ENCODE measurements at regions of chr6 and their contacts with region 1.

Region 1: DNA sequence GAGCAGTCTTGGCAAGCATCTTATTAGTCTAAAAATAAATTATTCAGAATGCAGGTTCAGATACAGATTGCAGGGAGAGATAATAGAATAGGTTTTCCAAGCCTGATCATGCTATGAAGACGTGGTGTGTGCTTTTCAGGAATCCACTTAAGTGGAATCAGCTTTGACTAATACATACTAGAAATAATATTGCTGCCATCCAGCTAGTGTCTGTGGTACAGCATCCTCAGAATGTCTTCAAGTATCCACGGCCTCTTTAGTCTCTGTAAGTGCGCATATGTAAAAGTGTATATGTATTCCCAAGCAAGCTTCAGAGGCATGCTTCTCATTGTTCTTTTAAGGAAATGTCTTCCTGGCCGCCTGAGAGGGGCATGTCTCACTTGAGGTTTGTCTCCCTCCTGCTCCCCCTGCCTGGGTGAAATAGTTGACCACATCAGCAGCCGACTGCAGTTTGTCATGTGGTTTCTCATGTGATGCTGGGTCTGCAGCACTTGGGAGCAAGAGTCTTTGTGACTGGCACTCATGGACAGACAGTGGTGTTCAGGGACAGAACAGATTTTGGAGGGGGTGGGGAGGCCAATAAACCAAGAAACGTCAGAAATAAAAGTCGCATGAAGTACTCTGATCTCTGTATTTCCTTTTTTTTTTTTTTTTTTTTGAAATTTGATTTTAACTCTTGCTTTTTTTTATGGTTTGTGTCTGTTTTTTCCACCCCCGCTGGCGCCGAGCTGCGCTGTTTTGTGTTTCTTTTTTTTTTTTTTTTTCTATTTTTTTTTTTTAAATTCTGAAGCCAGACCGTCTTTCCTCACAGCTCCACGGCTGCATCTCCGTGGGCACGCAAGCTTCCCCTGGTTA is 150.8 kb downstream of the PRL start:
- DNase-seq: peak in 4 of 9 experiments; percentile 5 to 53 (median 30)
- ATAC-seq: peak; percentile 12
- H3K4me3 ChIP-seq: peak overlapping the region; percentile 28 to 57
- H3K4me3 Mint-ChIP-seq: peak overlapping the region; percentile 81
- H3K27ac ChIP-seq: no peak overlapping the region
- H3K27ac Mint-ChIP-seq: peak overlapping the region; percentile 76
- H3K4me1 ChIP-seq: peaks cover 24% of the 10 kb centered on the region
- H3K4me1 Mint-ChIP-seq: peaks cover 41% of the 10 kb centered on the region
- H3K27me3 ChIP-seq: no peaks in the 10 kb centered on the region
- H3K27me3 Mint-ChIP-seq: peaks cover 25% of the 10 kb centered on the region
- CTCF ChIP-seq: no peak

Region 2: DNA sequence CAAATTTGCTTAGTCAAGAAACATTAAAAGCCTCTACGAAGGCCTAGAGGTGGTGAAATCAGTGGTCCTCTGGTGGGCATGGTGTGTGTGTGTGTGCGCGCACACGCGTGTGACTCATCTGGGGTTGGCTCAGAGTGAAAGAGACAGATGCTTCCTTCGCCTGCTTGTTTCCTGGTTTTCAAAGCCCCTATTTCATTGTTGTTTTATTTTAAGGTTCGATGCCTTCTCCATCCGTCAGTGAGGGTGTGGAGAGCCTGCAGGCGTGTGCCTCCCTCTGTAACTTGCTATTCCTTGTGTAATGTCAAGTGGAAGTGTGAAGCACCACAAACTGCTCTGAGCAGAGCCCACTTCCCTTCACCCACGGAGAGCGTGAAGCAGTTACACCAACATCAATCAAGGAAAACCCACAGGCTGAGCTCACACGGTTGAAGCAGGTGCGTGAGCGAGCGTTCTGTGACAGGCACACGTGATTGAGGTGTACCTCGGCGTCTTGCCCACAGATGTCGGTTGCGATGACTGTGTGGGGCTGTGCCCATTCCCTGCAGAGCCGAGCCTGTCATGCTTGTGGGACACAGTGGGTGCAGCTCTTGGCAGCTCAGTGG is 83.1 kb before region 1 on chr6:
- CTCF ChIA-PET with region 1: no interaction called
- POLR2A ChIA-PET with region 1: no interaction called
- intact Hi-C with region 1: loop called in 1 of 2 experiments (anchors 5 kb)
- DNase-seq: peak; percentile 2 to 82 (median 60)
- ATAC-seq: peak; percentile 83
- H3K4me3 ChIP-seq: peak overlapping the region in 1 of 2 experiments; percentile 20
- H3K4me3 Mint-ChIP-seq: peak overlapping the region; percentile 68
- H3K27ac ChIP-seq: peak overlapping the region in 1 of 2 experiments; percentile 10
- H3K27ac Mint-ChIP-seq: peak overlapping the region; percentile 53
- H3K4me1 ChIP-seq: peaks cover 8% of the 10 kb centered on the region
- H3K4me1 Mint-ChIP-seq: peaks cover 18% of the 10 kb centered on the region
- H3K27me3 ChIP-seq: no peaks in the 10 kb centered on the region
- H3K27me3 Mint-ChIP-seq: no peaks in the 10 kb centered on the region
- CTCF ChIP-seq: no peak

Region 3: DNA sequence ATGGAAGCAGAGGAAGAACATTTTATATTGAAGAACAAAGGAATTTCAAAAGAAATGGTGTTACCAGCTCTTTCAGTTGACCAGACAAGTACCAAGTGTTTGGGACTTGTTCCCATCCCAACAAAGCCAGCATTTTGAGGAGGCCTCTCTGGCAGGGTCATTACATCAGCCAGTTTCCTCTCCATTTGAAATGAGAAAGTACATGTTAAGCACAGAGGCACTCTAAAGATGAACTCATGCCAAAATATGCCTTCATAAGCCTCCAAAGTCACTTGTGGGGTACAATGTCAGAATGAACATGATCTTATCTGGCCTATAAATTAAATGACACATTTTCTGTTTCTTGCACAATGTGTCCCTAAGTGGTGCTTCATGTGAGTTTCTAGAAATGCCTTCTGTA is 73.1 kb before region 1 on chr6:
- CTCF ChIA-PET with region 1: no interaction called
- POLR2A ChIA-PET with region 1: no interaction called
- intact Hi-C with region 1: no loop called
- DNase-seq: no peak
- ATAC-seq: no peak
- H3K4me3 ChIP-seq: no peak overlapping the region
- H3K4me3 Mint-ChIP-seq: no peak overlapping the region
- H3K27ac ChIP-seq: no peak overlapping the region
- H3K27ac Mint-ChIP-seq: no peak overlapping the region
- H3K4me1 ChIP-seq: no peaks in the 10 kb centered on the region
- H3K4me1 Mint-ChIP-seq: no peaks in the 10 kb centered on the region
- H3K27me3 ChIP-seq: no peaks in the 10 kb centered on the region
- H3K27me3 Mint-ChIP-seq: no peaks in the 10 kb centered on the region
- CTCF ChIP-seq: no peak

Measured in CD8-positive, alpha-beta T cell (primary cell).